Body of pancreas (tissue), 4 donors: ENCODE measurements at regions of chr7 and their contacts with region 1.

Region 1: DNA sequence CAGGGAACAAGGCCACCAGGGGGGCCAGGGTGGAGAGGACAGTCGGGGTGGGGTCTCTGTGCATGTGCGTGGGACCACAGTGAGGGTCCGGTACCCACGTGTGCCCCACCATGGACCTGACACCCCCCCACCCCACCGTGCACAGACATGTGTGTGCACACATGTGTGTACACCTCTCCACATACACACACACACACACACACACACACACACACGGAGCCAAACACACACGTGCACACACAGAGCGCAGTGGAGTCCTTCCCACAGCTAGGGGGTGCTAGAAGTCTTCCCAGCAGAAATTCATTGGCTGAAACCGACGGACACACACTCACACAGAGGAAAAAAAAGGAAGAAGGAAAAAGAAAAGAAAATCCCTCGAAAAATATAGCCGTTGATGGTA is 42.8 kb upstream of the GNA12 start:
- DNase-seq: peak; percentile 49 to 72 (median 64)
- ATAC-seq: peak; percentile 86
- H3K4me3 ChIP-seq: no peak overlapping the region
- H3K27ac ChIP-seq: no peak overlapping the region
- H3K4me1 ChIP-seq: peaks cover 4% of the 10 kb centered on the region
- H3K27me3 ChIP-seq: no peaks in the 10 kb centered on the region
- CTCF ChIP-seq: peak; percentile 53 to 98 (median 76)
- POLR2A ChIP-seq: no peak

Region 2: GRCh38 chr7:3232228-3232627 is 345.3 kb after region 1 on chr7:
- intact Hi-C with region 1: no loop called
- DNase-seq: no peak
- ATAC-seq: no peak
- H3K4me3 ChIP-seq: no peak overlapping the region
- H3K27ac ChIP-seq: no peak overlapping the region
- H3K4me1 ChIP-seq: no peaks in the 10 kb centered on the region
- H3K27me3 ChIP-seq: no peaks in the 10 kb centered on the region
- CTCF ChIP-seq: no peak
- POLR2A ChIP-seq: no peak

Region 3: DNA sequence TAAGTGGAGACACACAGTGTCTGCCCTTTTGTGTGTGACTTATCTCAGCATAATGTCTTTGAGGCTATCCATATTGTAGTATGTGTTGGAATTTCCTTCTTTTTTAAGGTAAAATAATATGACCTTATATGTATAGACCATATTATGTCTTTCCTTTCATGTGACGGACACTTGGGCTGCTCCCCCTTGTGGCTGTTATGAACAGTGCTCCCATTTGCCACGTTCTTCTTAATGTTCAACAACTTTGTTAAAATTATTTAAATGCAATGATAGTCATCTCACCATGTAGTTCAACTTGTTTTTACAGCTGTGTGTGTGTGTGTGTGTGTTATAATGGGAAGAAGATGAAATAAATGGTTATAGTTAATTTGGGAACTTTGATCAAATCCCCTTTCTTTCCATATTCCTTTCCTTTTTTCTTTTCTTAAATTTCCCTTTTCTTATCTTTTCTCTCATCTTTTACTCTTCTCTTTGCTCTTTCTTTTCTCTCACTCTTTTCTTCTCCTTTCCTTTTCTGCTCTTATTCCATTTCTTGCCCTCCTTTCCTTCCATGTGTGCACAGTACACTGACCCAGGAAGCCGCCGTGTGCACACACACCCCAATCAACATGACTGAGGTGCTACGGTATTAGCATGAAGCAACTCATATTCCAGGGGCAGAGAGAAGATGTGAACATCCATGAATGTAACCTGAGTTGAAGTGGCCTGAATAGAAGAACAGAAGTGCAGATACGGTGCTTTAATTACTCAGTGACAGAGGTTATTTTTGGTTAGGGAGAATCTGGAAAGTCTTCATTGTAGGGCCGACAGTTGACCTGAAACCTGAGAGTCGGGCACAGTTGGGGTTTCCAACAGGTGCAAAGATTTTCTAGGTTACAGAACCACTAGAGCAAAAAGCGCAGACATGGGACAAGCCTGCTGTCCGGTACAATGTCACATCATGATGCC is 1010.8 kb after region 1 on chr7:
- intact Hi-C with region 1: loop called (anchors 10 kb)
- DNase-seq: peak; percentile 32 to 57 (median 42)
- ATAC-seq: no peak
- H3K4me3 ChIP-seq: no peak overlapping the region
- H3K27ac ChIP-seq: no peak overlapping the region
- H3K4me1 ChIP-seq: no peaks in the 10 kb centered on the region
- H3K27me3 ChIP-seq: no peaks in the 10 kb centered on the region
- CTCF ChIP-seq: peak; percentile 47 to 79 (median 75)
- POLR2A ChIP-seq: no peak